OCI-LY7 (cell line): ENCODE measurements at regions of chr3 and their contacts with region 1.

Region 1: GRCh38 chr3:35664460-35664919 is 25.2 kb downstream of the ARPP21 start:
- DNase-seq: peak; percentile 97
- H3K4me3 ChIP-seq: peak overlapping the region; percentile 49
- H3K27ac ChIP-seq: peak overlapping the region; percentile 92
- H3K4me1 ChIP-seq: peaks cover 82% of the 10 kb centered on the region
- CTCF ChIP-seq: no peak

Region 2: DNA sequence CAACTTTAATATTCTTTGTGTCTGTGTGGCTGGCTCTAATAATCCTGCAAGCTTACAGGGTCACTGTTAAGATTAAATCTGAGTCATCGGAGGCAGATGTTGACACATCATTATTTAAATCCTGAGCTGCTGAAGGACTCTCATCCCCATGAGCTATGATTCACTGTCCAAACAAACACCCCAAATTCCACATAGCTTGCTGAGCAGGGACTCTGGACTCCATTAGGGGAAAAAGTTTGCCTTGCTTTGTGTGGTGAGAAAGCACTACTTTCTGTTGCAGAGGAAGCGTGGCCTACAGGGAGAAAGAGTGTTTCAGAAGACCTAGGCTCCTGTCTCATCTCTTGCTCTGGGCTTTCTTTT is 1652.4 kb before region 1 on chr3:
- CTCF ChIA-PET with region 1: no interaction called
- POLR2A ChIA-PET with region 1: no interaction called
- intact Hi-C with region 1: loop called (anchors 10 kb)
- DNase-seq: no peak
- H3K4me3 ChIP-seq: no peak overlapping the region
- H3K27ac ChIP-seq: no peak overlapping the region
- H3K4me1 ChIP-seq: peaks cover 49% of the 10 kb centered on the region
- CTCF ChIP-seq: no peak

Region 3: GRCh38 chr3:35437381-35437780 is 227.1 kb before region 1 on chr3:
- CTCF ChIA-PET with region 1: no interaction called
- POLR2A ChIA-PET with region 1: no interaction called
- intact Hi-C with region 1: no loop called
- DNase-seq: no peak
- H3K4me3 ChIP-seq: no peak overlapping the region
- H3K27ac ChIP-seq: no peak overlapping the region
- H3K4me1 ChIP-seq: peaks cover 12% of the 10 kb centered on the region
- CTCF ChIP-seq: no peak

Region 4: GRCh38 chr3:35448121-35448520 is 216.4 kb before region 1 on chr3:
- CTCF ChIA-PET with region 1: no interaction called
- POLR2A ChIA-PET with region 1: no interaction called
- intact Hi-C with region 1: no loop called
- DNase-seq: no peak
- H3K4me3 ChIP-seq: no peak overlapping the region
- H3K27ac ChIP-seq: no peak overlapping the region
- H3K4me1 ChIP-seq: no peaks in the 10 kb centered on the region
- CTCF ChIP-seq: no peak

Region 5: GRCh38 chr3:35492841-35493240 is 171.6 kb before region 1 on chr3:
- CTCF ChIA-PET with region 1: no interaction called
- POLR2A ChIA-PET with region 1: interaction called, 7 read pairs
- intact Hi-C with region 1: loop called (anchors 2 kb)
- DNase-seq: peak; percentile 72
- H3K4me3 ChIP-seq: peak overlapping the region; percentile 25
- H3K27ac ChIP-seq: peak overlapping the region; percentile 82
- H3K4me1 ChIP-seq: peaks cover 37% of the 10 kb centered on the region
- CTCF ChIP-seq: no peak

Region 6: GRCh38 chr3:35647461-35647860 is 17.0 kb before region 1 on chr3:
- CTCF ChIA-PET with region 1: interaction called, 4 read pairs
- POLR2A ChIA-PET with region 1: interaction called, 22 read pairs
- intact Hi-C with region 1: no loop called
- DNase-seq: no peak
- H3K4me3 ChIP-seq: no peak overlapping the region
- H3K27ac ChIP-seq: no peak overlapping the region
- H3K4me1 ChIP-seq: peaks cover 9% of the 10 kb centered on the region
- CTCF ChIP-seq: no peak

Region 7: DNA sequence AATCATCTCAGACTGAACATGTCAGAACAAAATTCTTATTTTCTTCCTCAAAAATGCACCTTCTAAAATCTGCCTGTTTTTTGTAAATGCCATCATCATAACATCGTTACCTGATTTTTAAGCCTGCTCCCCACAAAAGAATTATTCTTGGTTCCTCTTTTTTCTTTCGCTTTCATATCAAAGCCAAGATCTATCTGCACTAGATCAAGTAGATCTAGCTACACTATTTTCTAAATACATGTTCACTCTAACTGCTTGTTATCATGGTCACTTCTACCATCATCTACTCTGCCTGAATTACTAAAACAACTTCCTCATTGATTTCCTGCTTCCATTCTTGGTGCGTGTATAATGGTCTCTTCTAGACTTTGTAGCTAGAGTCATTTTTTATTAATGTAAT is 192.5 kb after region 1 on chr3:
- CTCF ChIA-PET with region 1: no interaction called
- POLR2A ChIA-PET with region 1: interaction called, 3 read pairs
- intact Hi-C with region 1: loop called (anchors 2 kb)
- DNase-seq: peak; percentile 76
- H3K4me3 ChIP-seq: peak overlapping the region; percentile 36
- H3K27ac ChIP-seq: peak overlapping the region; percentile 70
- H3K4me1 ChIP-seq: peaks cover 21% of the 10 kb centered on the region
- CTCF ChIP-seq: no peak

Region 8: GRCh38 chr3:36201546-36201945 is 537.1 kb after region 1 on chr3:
- CTCF ChIA-PET with region 1: no interaction called
- POLR2A ChIA-PET with region 1: no interaction called
- intact Hi-C with region 1: no loop called
- DNase-seq: no peak
- H3K4me3 ChIP-seq: no peak overlapping the region
- H3K27ac ChIP-seq: no peak overlapping the region
- H3K4me1 ChIP-seq: no peaks in the 10 kb centered on the region
- CTCF ChIP-seq: no peak